Activated B cell treated with CpG ODN at 0.5 μM for 24 hours (primary cell): ENCODE measurements at regions of chr5 and their contacts with region 1.

Region 1: DNA sequence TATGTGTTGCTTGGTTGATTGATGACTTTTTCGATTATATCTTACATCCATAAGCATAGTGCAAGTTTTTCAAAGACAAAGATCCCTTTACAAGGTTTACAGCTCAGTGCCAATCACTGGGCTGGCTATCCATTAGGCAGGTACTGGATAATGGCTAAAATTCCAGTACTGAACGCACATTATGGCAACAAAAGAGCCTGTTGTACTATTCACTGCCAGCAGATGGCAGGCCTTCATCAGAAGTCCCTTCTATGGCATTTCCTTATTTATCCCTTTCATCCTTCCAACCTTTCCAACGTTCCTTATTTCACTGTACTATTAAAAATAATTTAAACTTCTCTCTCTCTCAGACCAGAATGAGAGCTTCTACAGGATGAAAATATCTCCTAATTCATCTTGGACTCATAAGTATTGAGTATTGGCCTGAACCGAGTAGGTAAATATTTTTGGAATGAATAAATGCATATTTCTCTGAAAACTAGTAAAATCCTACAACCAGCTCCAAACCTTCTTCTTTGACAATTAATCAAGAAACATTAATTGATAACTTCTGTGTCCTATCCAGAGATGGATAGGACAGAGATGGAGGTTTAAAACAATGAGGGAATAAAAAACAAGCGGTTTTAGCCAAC is 6.7 kb upstream of the WNT8A start:
- DNase-seq: no peak
- ATAC-seq: peak; percentile 54
- H3K4me3 Mint-ChIP-seq: no peak overlapping the region
- H3K27ac Mint-ChIP-seq: no peak overlapping the region
- H3K4me1 Mint-ChIP-seq: peaks cover 15% of the 10 kb centered on the region
- H3K27me3 Mint-ChIP-seq: no peaks in the 10 kb centered on the region
- CTCF ChIP-seq: peak; percentile 67

Region 2: DNA sequence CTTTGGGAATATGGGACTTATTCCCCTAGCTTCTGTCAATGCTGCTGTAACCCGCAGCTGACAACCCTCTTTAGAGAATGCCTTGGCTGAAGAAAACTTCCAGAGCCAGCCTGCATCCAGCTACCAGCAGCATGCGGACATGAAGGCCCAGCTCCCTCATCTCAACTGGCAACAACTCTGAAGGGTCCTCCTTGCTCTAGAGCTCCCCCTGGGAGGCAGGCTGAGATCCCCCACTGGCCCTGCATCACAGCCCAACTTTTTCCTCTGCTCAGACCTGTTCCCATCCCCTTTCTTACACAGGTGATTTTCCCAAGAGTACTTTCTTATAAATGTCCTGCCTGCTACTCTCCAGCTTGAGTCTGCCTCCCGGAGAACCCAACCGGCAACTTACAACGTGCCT is 12.1 kb before region 1 on chr5:
- CTCF ChIA-PET with region 1: interaction called, 12 read pairs
- POLR2A ChIA-PET with region 1: no interaction called
- intact Hi-C with region 1: no loop called
- DNase-seq: no peak
- ATAC-seq: no peak
- H3K4me3 Mint-ChIP-seq: no peak overlapping the region
- H3K27ac Mint-ChIP-seq: no peak overlapping the region
- H3K4me1 Mint-ChIP-seq: peaks cover 5% of the 10 kb centered on the region
- H3K27me3 Mint-ChIP-seq: no peaks in the 10 kb centered on the region
- CTCF ChIP-seq: no peak

Region 3: DNA sequence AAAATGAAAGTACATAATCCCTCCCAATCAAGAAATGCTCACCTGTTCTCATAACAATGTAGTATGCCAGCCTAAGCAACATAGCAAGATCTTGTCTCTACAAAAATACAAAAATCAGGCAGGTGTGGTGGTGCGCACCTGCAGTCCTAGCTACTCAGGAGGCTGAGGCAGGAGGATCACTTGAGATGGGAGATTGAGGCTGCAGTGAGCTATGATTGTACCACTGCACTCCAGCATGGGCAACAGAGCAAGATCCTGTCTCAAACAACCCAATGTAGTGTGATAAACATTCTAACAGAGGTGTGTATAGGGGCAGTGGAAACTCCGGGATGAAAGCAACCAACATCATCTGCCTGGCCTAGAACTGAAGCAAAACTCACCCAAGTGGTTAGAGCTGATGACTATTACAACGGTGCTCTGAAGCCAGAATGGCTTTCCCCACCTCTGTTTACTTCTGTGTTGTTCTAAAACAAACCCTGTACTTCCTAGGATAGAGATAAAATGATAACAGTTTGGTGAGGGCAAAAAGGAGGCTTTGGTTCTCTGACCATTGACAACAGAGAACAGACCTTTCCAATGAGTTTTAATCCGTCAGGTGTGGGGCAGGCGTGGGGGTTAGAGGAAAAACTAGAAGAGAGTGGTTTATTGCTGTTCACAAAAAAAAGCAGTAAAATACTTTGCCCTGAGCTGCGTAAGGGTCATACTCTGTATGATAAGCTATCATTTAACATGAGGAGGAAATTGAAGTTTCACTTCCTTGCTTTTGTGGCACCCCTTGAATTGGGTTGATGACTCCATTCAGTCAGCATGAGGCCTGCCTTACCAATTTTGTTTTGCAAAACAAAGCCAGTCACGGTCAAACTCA is 25.5 kb after region 1 on chr5:
- CTCF ChIA-PET with region 1: interaction called, 4 read pairs
- POLR2A ChIA-PET with region 1: interaction called, 7 read pairs
- intact Hi-C with region 1: loop called (anchors 2 kb)
- DNase-seq: no peak
- ATAC-seq: peak; percentile 95
- H3K4me3 Mint-ChIP-seq: peak overlapping the region; percentile 6
- H3K27ac Mint-ChIP-seq: peak overlapping the region; percentile 43
- H3K4me1 Mint-ChIP-seq: peaks cover 23% of the 10 kb centered on the region
- H3K27me3 Mint-ChIP-seq: peaks cover 5% of the 10 kb centered on the region
- CTCF ChIP-seq: no peak

Region 4: GRCh38 chr5:138110266-138110963 is 33.2 kb after region 1 on chr5:
- CTCF ChIA-PET with region 1: interaction called, 5 read pairs
- POLR2A ChIA-PET with region 1: interaction called, 12 read pairs
- intact Hi-C with region 1: no loop called
- DNase-seq: no peak
- ATAC-seq: no peak
- H3K4me3 Mint-ChIP-seq: no peak overlapping the region
- H3K27ac Mint-ChIP-seq: no peak overlapping the region
- H3K4me1 Mint-ChIP-seq: no peaks in the 10 kb centered on the region
- H3K27me3 Mint-ChIP-seq: peaks cover 10% of the 10 kb centered on the region
- CTCF ChIP-seq: no peak

Region 5: DNA sequence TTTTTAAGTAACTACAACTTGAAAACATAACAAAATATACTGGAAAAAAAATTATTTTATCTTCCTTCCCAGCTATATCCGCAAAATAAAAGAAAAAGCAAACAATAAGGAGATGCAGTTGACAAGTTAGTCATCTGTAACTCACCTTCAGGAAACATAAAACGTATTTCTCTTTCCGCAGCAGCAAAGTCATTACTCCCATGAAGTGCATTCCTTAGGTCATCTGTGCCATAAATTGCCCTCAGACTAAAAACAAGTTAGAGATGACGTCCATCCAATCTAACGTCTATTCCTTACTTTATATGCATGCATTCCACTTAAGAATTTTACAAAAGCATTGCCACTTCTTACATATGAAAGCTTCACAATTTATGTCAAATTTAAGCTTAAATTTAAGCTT is 51.2 kb after region 1 on chr5:
- CTCF ChIA-PET with region 1: interaction called, 123 read pairs
- POLR2A ChIA-PET with region 1: interaction called, 5 read pairs
- intact Hi-C with region 1: loop called (anchors 1 kb)
- DNase-seq: no peak
- ATAC-seq: no peak
- H3K4me3 Mint-ChIP-seq: no peak overlapping the region
- H3K27ac Mint-ChIP-seq: no peak overlapping the region
- H3K4me1 Mint-ChIP-seq: peaks cover 3% of the 10 kb centered on the region
- H3K27me3 Mint-ChIP-seq: peaks cover 3% of the 10 kb centered on the region
- CTCF ChIP-seq: no peak

Region 6: DNA sequence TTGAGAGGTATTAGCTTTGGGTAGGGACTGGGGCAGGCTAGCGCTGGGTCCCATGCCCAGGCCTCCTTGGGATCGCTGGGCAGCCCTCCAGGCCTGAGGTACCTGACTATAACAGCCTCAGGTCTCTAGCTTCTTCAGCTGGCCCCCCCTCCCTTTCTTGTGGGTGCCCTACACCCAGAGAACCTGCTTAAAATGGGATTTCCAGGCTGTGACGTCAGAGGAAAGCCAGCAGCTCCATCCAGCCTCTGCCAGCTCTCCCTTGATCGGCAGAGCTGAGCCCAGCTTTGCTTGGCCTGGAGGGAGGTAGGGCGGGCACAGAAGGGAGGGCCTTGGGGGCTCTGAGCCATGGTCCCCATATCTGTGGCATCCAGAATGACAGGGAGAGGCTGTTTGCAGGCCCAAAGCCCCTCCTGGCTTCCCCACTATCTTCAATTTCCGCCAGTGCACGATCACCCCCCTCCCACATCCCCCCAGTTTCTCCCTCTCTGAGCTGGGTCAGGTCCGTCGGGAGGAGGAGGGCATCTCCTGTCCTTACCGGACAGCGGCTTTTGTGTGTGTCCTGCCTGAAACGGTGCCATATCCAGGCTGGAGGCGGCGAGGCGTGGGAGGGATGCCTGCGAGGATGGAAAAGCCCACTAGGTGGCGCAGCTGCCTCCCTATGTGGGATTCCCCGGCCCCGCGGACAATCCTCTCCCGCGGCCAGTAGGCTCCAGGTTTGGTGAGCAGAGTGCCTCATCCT is 372.5 kb after region 1 on chr5:
- CTCF ChIA-PET with region 1: no interaction called
- POLR2A ChIA-PET with region 1: no interaction called
- intact Hi-C with region 1: no loop called
- DNase-seq: peak; percentile 75
- ATAC-seq: peak; percentile 98
- H3K4me3 Mint-ChIP-seq: no peak overlapping the region
- H3K27ac Mint-ChIP-seq: no peak overlapping the region
- H3K4me1 Mint-ChIP-seq: peaks cover 6% of the 10 kb centered on the region
- H3K27me3 Mint-ChIP-seq: peaks cover 4% of the 10 kb centered on the region
- CTCF ChIP-seq: peak; percentile 59